ENCODE measurements at regions of chr17 and their contacts with region 1.

Region 1: DNA sequence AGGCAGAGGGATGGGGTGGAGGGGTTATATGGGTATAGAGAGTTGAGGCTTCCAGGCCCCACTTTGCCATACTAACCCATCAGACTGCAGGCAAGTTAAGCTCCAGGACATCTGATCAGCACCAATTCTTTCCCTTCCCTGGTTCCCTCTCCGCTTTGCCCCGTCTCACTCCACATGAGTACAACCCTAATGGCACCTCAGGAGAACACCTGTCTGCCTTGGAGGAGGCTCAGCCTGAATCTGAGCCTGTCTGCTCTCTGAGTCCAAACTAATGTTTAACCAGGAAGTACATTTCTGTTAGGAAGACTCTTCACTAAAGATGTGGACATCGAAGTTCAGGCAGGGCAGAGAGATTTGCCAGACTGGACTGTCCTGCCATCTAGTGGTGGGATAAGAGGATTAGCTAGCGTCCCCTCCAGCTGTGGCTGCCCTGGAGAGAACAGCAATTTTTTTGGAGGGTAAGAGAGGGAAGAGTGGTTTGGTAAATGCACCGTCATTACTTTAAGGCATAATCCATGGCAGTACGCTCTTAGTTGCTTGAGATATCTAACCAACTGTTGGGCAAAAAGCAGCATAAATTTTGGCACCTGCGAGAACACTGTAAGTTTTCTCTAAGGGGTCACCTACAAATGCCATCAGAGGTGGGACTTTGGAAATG is 29.2 kb upstream of the LRRC75A start:
- DNase-seq: peak; percentile 77 to 93
- H3K4me3 ChIP-seq: no peak overlapping the region
- CTCF ChIP-seq: peak in 1 of 3 donors; percentile 74
- POLR2A ChIP-seq: no peak

Region 2: GRCh38 chr17:16353317-16354174 is 167.7 kb before region 1 on chr17 and contains the start of gene CENPV:
- intact Hi-C with region 1: loop called (anchors 10 kb)
- DNase-seq: no peak
- H3K4me3 ChIP-seq: peak within 1 kb of the TSS; percentile 53
- CTCF ChIP-seq: no peak
- POLR2A ChIP-seq: no peak
- total RNA-seq, gene CENPV: 2.1 to 4.9 (median 3.8) TPM

Region 3: GRCh38 chr17:16453493-16453851 is 67.7 kb before region 1 on chr17:
- intact Hi-C with region 1: loop called (anchors 5 kb)
- DNase-seq: no peak
- H3K4me3 ChIP-seq: no peak overlapping the region
- CTCF ChIP-seq: no peak
- POLR2A ChIP-seq: no peak